B cell (primary cell): ENCODE measurements at regions of chr9 and their contacts with region 1.

Region 1: GRCh38 chr9:133459476-133460404 is at the start of gene CACFD1:
- DNase-seq: peak; percentile 97
- ATAC-seq: peak; percentile 74
- H3K4me3 ChIP-seq: peak within 1 kb of the TSS; percentile 31 to 86 (median 79)
- H3K4me3 Mint-ChIP-seq: peak within 1 kb of the TSS; percentile 94
- H3K27ac ChIP-seq: peak within 1 kb of the TSS; percentile 83 to 98
- H3K27ac Mint-ChIP-seq: peak within 1 kb of the TSS; percentile 99
- H3K4me1 ChIP-seq: peaks cover 13 to 35% of the 10 kb centered on the region in 2 donors
- H3K4me1 Mint-ChIP-seq: peaks cover 23% of the 10 kb centered on the region
- H3K27me3 ChIP-seq: no peaks in the 10 kb centered on the region
- H3K27me3 Mint-ChIP-seq: no peaks in the 10 kb centered on the region
- CTCF ChIP-seq: no peak
- total RNA-seq, gene CACFD1: 31.1 and 37.1 TPM in 2 replicates

Region 2: GRCh38 chr9:133335878-133336811 is 123.6 kb before region 1 on chr9 and contains the start of gene SURF6:
- CTCF ChIA-PET with region 1: no interaction called
- POLR2A ChIA-PET with region 1: interaction called, 3 read pairs
- intact Hi-C with region 1: loop called (anchors 1 kb)
- DNase-seq: peak; percentile 94
- ATAC-seq: peak; percentile 92
- H3K4me3 ChIP-seq: peak within 1 kb of the TSS; percentile 49 to 90 (median 82)
- H3K4me3 Mint-ChIP-seq: peak within 1 kb of the TSS; percentile 99
- H3K27ac ChIP-seq: peak within 1 kb of the TSS; percentile 76 to 78
- H3K27ac Mint-ChIP-seq: peak within 1 kb of the TSS; percentile 95
- H3K4me1 ChIP-seq: peaks cover 30 to 50% of the 10 kb centered on the region in 2 donors
- H3K4me1 Mint-ChIP-seq: peaks cover 53% of the 10 kb centered on the region
- H3K27me3 ChIP-seq: no peaks in the 10 kb centered on the region
- H3K27me3 Mint-ChIP-seq: no peaks in the 10 kb centered on the region
- CTCF ChIP-seq: no peak
- total RNA-seq, gene SURF6: 24.8 and 25.9 TPM in 2 replicates

Region 3: GRCh38 chr9:133375724-133376654 is 83.8 kb before region 1 on chr9 and contains the starts of genes STKLD1 and SURF4:
- CTCF ChIA-PET with region 1: no interaction called
- POLR2A ChIA-PET with region 1: no interaction called
- intact Hi-C with region 1: loop called (anchors 1 kb)
- DNase-seq: peak; percentile 95
- ATAC-seq: peak; percentile 97
- H3K4me3 ChIP-seq: peak within 1 kb of the TSS; percentile 39 to 78 (median 66)
- H3K4me3 Mint-ChIP-seq: peak within 1 kb of the TSS; percentile 94
- H3K27ac ChIP-seq: peak within 1 kb of the TSS; percentile 18 to 91
- H3K27ac Mint-ChIP-seq: peak within 1 kb of the TSS; percentile 84
- H3K4me1 ChIP-seq: peaks cover 25 to 40% of the 10 kb centered on the region in 2 donors
- H3K4me1 Mint-ChIP-seq: peaks cover 33% of the 10 kb centered on the region
- H3K27me3 ChIP-seq: no peaks in the 10 kb centered on the region
- H3K27me3 Mint-ChIP-seq: no peaks in the 10 kb centered on the region
- CTCF ChIP-seq: no peak
- total RNA-seq, gene STKLD1: 1.1 and 2.7 TPM in 2 replicates
- total RNA-seq, gene SURF4: 43.8 and 44.1 TPM in 2 replicates

Region 4: DNA sequence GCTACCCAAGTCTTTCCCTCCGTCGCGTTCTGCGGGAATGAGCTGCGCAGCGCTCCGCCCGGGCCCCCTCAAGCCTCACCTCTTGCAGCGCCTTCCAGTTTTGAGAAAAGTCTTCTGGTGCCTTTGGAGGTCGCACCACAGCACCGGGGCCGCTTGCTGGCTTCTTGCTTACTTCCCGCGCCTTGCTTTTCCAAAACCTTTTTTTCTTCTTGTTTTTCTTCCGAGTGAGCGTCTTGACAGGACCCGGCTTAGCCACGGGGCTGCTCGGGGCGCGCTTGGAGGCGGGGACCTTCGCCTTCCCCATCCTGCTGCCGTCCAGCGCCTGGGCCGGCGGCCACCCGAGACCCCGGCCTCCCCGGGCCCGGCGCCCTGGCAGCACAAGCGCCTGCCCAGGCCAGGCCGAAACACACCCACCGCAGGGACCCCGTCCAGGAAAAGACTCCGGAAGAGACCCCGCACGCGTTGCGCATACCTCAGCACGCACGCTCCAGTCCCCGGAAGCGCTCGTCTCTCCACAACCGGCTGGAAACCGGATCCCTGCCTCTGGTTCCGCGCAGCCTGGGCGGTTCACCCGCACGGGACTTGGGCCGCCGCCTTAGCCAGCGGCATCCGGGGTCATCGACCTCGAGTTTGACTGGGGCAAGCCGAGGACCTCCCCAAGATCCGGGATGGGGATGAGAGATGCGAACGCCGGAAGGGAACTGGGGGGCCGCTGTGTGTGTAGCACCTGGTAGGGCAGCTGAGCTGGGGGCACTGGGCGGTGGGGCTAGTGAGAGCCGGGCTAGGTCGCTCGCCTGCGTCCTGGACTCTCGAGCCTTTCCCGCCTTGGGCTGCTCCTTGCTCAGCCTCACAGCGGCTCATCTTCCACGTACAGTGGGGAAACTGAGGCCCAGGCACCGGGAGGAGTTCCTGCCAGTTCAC is 41.9 kb before region 1 on chr9 and contains the start of gene REXO4:
- CTCF ChIA-PET with region 1: interaction called, 4 read pairs
- POLR2A ChIA-PET with region 1: interaction called, 5 read pairs
- intact Hi-C with region 1: loop called (anchors 1 kb)
- DNase-seq: peak; percentile 92
- ATAC-seq: peak; percentile 78
- H3K4me3 ChIP-seq: peak within 1 kb of the TSS; percentile 74 to 87 (median 81)
- H3K4me3 Mint-ChIP-seq: peak within 1 kb of the TSS; percentile 89
- H3K27ac ChIP-seq: peak within 1 kb of the TSS; percentile 79 to 92
- H3K27ac Mint-ChIP-seq: peak within 1 kb of the TSS; percentile 93
- H3K4me1 ChIP-seq: peaks cover 30 to 63% of the 10 kb centered on the region in 2 donors
- H3K4me1 Mint-ChIP-seq: peaks cover 68% of the 10 kb centered on the region
- H3K27me3 ChIP-seq: no peaks in the 10 kb centered on the region
- H3K27me3 Mint-ChIP-seq: no peaks in the 10 kb centered on the region
- CTCF ChIP-seq: no peak
- total RNA-seq, gene REXO4: 37.1 and 39.9 TPM in 2 replicates

Region 5: DNA sequence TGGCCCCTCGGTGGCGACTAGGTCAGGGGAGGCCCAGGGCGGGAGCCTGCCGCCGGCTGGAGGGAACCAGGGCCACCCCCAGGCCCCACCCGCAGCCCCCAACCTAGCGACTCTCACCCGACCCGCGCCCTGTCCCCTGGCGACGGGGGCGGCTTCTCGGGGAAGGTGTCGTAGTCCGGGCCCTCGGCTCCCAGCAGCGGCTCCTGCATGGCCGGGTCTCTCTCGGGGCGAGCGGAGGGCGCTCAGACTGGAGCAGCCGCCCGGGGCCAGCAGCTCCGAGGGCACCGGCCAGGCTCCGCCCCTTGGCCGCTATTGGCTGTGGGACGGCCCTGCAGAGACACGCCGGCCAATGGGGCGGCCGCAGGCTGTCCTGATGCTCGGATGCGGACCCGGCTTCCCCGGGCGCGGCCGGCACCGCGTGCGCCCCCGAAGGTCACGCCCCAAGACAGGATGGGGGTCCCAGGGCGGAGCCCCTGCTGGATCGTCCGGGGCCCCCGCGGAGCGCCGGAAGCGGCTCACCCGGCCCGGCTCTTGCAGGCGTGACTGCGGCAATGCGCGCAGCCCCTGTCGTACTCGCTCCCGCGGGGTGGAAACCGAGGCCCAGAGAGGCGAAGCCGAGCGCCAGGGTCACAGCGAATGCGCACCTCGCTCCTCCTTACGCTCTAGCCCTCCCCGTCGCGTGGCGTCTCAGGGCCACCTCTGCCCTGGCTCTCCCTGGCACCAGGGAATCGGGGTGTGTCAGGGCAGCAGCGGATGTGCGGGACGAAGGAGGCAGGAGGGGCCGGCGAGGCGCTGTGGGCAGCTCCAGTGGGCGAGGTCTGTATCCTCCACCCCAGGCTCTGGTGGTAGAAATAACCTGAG is 19.3 kb after region 1 on chr9 and contains the start of gene SLC2A6:
- CTCF ChIA-PET with region 1: interaction called, 7 read pairs
- POLR2A ChIA-PET with region 1: interaction called, 28 read pairs
- intact Hi-C with region 1: loop called (anchors 1 kb)
- DNase-seq: peak; percentile 87
- ATAC-seq: peak; percentile 92
- H3K4me3 ChIP-seq: peak within 1 kb of the TSS; percentile 22 to 83 (median 79)
- H3K4me3 Mint-ChIP-seq: peak within 1 kb of the TSS; percentile 89
- H3K27ac ChIP-seq: peak within 1 kb of the TSS; percentile 71 to 78
- H3K27ac Mint-ChIP-seq: peak within 1 kb of the TSS; percentile 90
- H3K4me1 ChIP-seq: peaks cover 28 to 53% of the 10 kb centered on the region in 2 donors
- H3K4me1 Mint-ChIP-seq: peaks cover 31% of the 10 kb centered on the region
- H3K27me3 ChIP-seq: no peaks in the 10 kb centered on the region
- H3K27me3 Mint-ChIP-seq: peaks cover 3% of the 10 kb centered on the region
- CTCF ChIP-seq: no peak
- total RNA-seq, gene SLC2A6: 47.0 and 51.8 TPM in 2 replicates

Region 6: GRCh38 chr9:133813749-133814585 is 354.2 kb after region 1 on chr9:
- CTCF ChIA-PET with region 1: no interaction called
- POLR2A ChIA-PET with region 1: no interaction called
- intact Hi-C with region 1: no loop called
- DNase-seq: peak; percentile 56
- ATAC-seq: peak; percentile 41
- H3K4me3 ChIP-seq: no peak overlapping the region
- H3K4me3 Mint-ChIP-seq: peak overlapping the region; percentile 23
- H3K27ac ChIP-seq: peak overlapping the region in 1 of 2 donors; percentile 68
- H3K27ac Mint-ChIP-seq: peak overlapping the region; percentile 67
- H3K4me1 ChIP-seq: peaks cover 35 to 44% of the 10 kb centered on the region in 2 donors
- H3K4me1 Mint-ChIP-seq: peaks cover 43% of the 10 kb centered on the region
- H3K27me3 ChIP-seq: no peaks in the 10 kb centered on the region
- H3K27me3 Mint-ChIP-seq: no peaks in the 10 kb centered on the region
- CTCF ChIP-seq: no peak